ENCODE measurements at regions of chrX and their contacts with region 1.

Region 1: DNA sequence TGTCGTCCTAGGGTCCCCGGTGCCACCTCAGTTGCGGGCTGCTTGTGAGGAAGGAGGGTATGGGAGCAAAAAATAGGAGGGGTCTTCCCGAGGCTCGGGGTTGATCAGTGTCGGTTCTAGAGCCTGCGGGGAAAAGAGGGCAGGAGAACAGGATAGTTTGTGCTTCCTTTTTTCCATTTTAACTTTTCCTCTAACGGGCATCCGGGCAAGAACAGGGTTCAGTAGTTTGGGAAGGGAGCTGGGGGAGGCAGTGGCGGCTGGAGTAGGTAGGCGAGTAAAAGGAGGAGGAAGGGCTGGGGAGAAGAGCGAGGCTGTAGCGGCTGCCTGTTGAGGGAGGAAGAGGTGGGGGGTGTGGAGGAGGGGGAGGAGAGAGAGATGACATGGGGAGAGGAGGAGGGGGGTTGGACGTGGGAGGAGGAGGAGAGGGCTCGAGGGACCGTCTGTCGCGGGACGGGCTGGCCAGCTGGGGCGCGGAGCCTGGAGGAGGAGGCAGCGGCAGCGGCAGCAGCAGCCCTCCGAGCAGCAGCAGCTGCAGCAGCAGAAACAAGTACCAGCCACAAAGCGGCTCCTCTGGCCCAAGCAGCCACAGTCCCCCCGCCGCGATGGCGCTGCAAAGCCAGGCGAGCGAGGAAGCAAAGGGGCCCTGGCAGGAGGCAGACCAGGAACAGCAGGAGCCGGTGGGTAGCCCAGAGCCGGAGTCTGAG is at the start of gene SLC16A2:
- DNase-seq: peak; percentile 41 to 53
- ATAC-seq: peak; percentile 70 to 76
- H3K4me3 ChIP-seq: peak within 1 kb of the TSS; percentile 55 to 61 (median 58)
- H3K27ac ChIP-seq: peak within 1 kb of the TSS; percentile 76 to 83 (median 80)
- H3K4me1 ChIP-seq: peaks cover 3 to 8% of the 10 kb centered on the region in 2 donors
- H3K27me3 ChIP-seq: peaks cover 0 to 2% (median 0%) of the 10 kb centered on the region in 3 donors
- CTCF ChIP-seq: no peak
- POLR2A ChIP-seq: no peak
- total RNA-seq, gene SLC16A2: 1.3 to 2.4 (median 2.1) TPM

Region 2: DNA sequence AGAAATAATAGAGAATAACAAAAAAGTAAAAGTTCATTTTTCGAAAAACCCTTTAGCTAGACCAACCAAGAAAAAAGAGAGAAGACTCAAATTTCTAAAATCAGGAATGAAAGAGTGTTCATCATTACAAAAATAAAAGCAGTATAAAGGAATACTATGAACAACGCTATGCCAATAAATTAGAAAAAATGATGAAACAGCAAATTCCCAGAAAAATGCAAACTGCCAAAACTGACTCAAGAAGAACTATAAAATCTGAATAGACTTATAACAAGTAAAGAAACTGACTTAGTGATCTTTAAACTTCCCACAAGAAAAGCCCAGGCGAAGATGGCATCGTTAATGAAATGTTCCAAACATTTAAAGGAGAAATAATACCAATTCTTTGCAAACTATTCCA is 120.3 kb before region 1 on chrX:
- in situ Hi-C with region 1: no loop called
- intact Hi-C with region 1: no loop called
- DNase-seq: no peak
- ATAC-seq: no peak
- H3K4me3 ChIP-seq: no peak overlapping the region
- H3K27ac ChIP-seq: no peak overlapping the region
- H3K4me1 ChIP-seq: no peaks in the 10 kb centered on the region
- H3K27me3 ChIP-seq: peaks cover 0 to 5% (median 0%) of the 10 kb centered on the region in 3 donors
- CTCF ChIP-seq: no peak
- POLR2A ChIP-seq: no peak

Region 3: GRCh38 chrX:74614093-74614909 is 193.1 kb after region 1 on chrX and contains the start of gene RLIM:
- in situ Hi-C with region 1: no loop called
- intact Hi-C with region 1: loop called (anchors 5 kb)
- DNase-seq: peak; percentile 90 to 94
- ATAC-seq: peak; percentile 95 to 96
- H3K4me3 ChIP-seq: peak within 1 kb of the TSS; percentile 59 to 86 (median 70)
- H3K27ac ChIP-seq: peak within 1 kb of the TSS; percentile 90 to 95 (median 93)
- H3K4me1 ChIP-seq: no peaks in the 10 kb centered on the region
- H3K27me3 ChIP-seq: peaks cover 0 to 3% (median 0%) of the 10 kb centered on the region in 3 donors
- CTCF ChIP-seq: no peak
- POLR2A ChIP-seq: peak; percentile 79 to 83
- total RNA-seq, gene RLIM: 15.3 to 26.7 (median 21.5) TPM